ENCODE measurements at regions of chr14 and their contacts with region 1.

Region 1: GRCh38 chr14:32403688-32404087 is 74.6 kb downstream of the AKAP6 start:
- DNase-seq: no peak
- H3K4me3 ChIP-seq: no peak overlapping the region
- H3K27ac ChIP-seq: no peak overlapping the region
- H3K4me1 ChIP-seq: no peaks in the 10 kb centered on the region
- H3K27me3 ChIP-seq: no peaks in the 10 kb centered on the region
- CTCF ChIP-seq: no peak

Region 2: GRCh38 chr14:30974628-30975027 is 1429.1 kb before region 1 on chr14:
- CTCF ChIA-PET with region 1: interaction called, 10 read pairs
- POLR2A ChIA-PET with region 1: no interaction called
- intact Hi-C with region 1: no loop called
- DNase-seq: no peak
- H3K4me3 ChIP-seq: no peak overlapping the region
- H3K27ac ChIP-seq: no peak overlapping the region
- H3K4me1 ChIP-seq: no peaks in the 10 kb centered on the region
- H3K27me3 ChIP-seq: no peaks in the 10 kb centered on the region
- CTCF ChIP-seq: no peak